Dorsolateral prefrontal cortex (tissue), 120 donors: ENCODE measurements at regions of chr13 and their contacts with region 1.

Region 1: DNA sequence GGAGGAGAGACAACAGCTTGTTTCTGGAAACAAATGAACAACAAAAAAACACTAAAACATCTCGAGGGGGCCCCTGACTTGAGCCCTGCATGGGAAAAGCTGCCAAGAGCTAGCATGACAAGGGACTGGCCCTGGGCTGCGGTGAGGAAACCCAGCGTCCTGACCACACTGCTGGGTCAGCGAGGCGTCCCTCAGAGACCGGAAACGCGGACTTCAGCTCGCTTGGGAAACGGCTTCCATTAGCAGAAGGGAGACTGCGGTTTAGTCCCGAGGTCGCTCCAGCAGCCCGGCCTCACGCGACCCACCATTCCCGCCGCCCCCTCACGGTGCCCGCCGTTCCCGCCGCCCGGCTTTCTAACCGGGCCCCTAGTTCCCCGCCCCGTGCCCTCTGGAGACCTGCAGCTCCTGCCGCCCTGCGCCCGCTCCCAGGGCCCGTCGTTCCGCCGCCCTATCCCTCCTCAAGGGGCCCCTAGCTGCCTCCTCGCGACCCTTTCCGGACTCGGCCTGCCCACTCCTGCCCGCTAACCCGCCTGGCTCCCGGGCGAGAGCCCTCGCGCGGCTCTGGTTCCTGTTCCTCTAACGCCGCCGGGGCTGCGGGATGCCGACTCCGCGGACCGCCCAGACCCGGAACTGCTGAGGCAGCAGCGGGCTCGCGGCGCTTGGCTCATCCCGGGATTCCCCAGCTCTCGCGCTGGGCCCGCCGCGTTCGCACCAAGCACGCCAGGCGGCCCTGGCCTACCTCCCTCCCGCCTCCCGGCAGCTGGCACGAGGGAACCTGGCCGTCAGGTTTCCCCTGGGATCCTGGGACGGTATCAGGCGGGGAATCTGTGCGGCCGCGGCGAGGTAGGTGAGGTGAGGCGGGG is at the start of gene CCDC122:
- DNase-seq: peak; percentile 49 to 82 (median 66)
- H3K4me3 ChIP-seq: peak within 1 kb of the TSS; percentile 50 to 90 (median 77)
- H3K27ac ChIP-seq: peak within 1 kb of the TSS; percentile 84 to 99 (median 97)
- H3K27me3 ChIP-seq: no peaks in the 10 kb centered on the region
- CTCF ChIP-seq: peak in 14 of 56 donors; percentile 5 to 32 (median 16)
- total RNA-seq, gene CCDC122: 0.69 to 15.7 (median 5.3) TPM

Region 2: GRCh38 chr13:42969558-42970172 is 909.5 kb before region 1 on chr13:
- intact Hi-C with region 1: loop called in 1 of 2 experiments (anchors 10 kb)
- DNase-seq: peak; percentile 55 to 75 (median 70)
- H3K4me3 ChIP-seq: no peak overlapping the region
- H3K27ac ChIP-seq: no peak overlapping the region
- H3K27me3 ChIP-seq: no peaks in the 10 kb centered on the region
- CTCF ChIP-seq: peak; percentile 69 to 93 (median 83)

Region 3: GRCh38 chr13:43085545-43085944 is 793.6 kb before region 1 on chr13:
- intact Hi-C with region 1: loop called in 1 of 2 experiments (anchors 10 kb)
- DNase-seq: no peak
- H3K4me3 ChIP-seq: no peak overlapping the region
- H3K27ac ChIP-seq: peak overlapping the region in 2 of 59 donors; percentile 3 to 12
- H3K27me3 ChIP-seq: no peaks in the 10 kb centered on the region
- CTCF ChIP-seq: peak; percentile 59 to 92 (median 77)

Region 4: DNA sequence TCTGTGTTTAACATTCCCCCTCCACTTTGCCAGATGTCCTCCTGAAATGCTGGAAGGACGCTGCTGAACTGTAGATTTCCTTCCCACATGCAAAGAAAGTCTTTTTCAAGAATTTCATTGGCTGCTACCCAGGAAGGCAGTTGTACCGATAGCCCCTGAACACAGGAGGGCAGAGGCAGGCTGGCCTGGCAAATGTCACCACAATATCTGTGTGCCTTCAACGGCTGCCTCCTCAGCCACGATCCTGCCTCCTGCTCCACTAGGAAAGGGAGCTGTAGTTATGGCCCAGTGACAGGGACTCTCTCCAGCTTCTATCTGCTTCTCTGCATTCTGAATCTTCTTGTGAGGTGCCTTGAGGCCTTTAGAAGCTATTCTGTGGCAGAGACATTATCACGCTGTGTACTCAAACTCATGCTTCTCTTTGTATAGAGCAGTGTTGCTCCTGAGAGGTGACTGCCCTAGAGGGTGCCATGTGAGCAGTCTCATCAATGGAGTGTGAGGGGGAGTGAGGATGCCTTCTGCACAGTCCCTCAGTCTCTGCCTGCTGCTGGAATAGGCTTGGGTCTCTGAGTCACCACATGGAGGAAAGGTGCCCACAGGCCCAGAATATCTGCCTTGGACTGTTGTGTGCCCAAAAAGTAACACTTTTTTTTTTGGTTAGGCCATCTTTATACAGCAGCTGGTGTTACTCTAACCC is 575.9 kb before region 1 on chr13:
- intact Hi-C with region 1: loop called (anchors 5 to 10 kb)
- DNase-seq: peak; percentile 20 to 74 (median 70)
- H3K4me3 ChIP-seq: no peak overlapping the region
- H3K27ac ChIP-seq: peak overlapping the region in 52 of 59 donors; percentile 5 to 85 (median 62)
- H3K27me3 ChIP-seq: no peaks in the 10 kb centered on the region
- CTCF ChIP-seq: peak; percentile 13 to 77 (median 58)

Region 5: GRCh38 chr13:43804461-43805070 is 74.6 kb before region 1 on chr13:
- intact Hi-C with region 1: loop called in 1 of 2 experiments (anchors 2 kb)
- DNase-seq: no peak
- H3K4me3 ChIP-seq: peak overlapping the region in 58 of 59 donors; percentile 3 to 68 (median 42)
- H3K27ac ChIP-seq: peak overlapping the region; percentile 16 to 100 (median 93)
- H3K27me3 ChIP-seq: no peaks in the 10 kb centered on the region
- CTCF ChIP-seq: peak; percentile 53 to 93 (median 75)

Region 6: DNA sequence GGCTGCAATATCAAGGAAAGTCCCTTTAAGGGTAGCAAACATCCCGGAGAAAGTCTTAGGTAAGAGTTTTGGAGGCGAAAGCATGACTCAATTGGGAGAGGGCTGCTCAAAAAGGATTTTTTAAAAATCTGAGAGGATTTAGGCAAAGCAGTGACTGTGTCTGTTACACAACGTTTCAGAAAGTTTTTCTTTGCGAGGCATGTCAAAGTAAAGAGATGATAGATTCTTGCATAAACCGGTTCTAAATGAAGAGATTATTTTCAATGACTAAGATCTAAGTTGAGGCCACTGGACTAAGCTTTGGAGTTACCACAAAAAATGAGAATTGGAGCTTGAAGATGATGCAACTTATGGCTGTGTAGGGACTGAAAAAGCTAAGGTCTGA is 48.6 kb before region 1 on chr13:
- intact Hi-C with region 1: no loop called
- DNase-seq: no peak
- H3K4me3 ChIP-seq: no peak overlapping the region
- H3K27ac ChIP-seq: peak overlapping the region in 16 of 59 donors; percentile 2 to 65 (median 32)
- H3K27me3 ChIP-seq: no peaks in the 10 kb centered on the region
- CTCF ChIP-seq: no peak